Activated CD4-positive, alpha-beta T cell treated with anti-CD3 and anti-CD28 coated beads for 36 hours (primary cell): ENCODE measurements at regions of chr10 and their contacts with region 1.

Region 1: GRCh38 chr10:30783939-30784500 is 154.5 kb upstream of the LYZL2 start:
- DNase-seq: peak; percentile 90
- ATAC-seq: peak; percentile 86
- H3K4me3 Mint-ChIP-seq: peak overlapping the region; percentile 66
- H3K27ac Mint-ChIP-seq: peak overlapping the region; percentile 21
- H3K4me1 Mint-ChIP-seq: peaks cover 20% of the 10 kb centered on the region
- H3K27me3 Mint-ChIP-seq: peaks cover 2% of the 10 kb centered on the region

Region 2: DNA sequence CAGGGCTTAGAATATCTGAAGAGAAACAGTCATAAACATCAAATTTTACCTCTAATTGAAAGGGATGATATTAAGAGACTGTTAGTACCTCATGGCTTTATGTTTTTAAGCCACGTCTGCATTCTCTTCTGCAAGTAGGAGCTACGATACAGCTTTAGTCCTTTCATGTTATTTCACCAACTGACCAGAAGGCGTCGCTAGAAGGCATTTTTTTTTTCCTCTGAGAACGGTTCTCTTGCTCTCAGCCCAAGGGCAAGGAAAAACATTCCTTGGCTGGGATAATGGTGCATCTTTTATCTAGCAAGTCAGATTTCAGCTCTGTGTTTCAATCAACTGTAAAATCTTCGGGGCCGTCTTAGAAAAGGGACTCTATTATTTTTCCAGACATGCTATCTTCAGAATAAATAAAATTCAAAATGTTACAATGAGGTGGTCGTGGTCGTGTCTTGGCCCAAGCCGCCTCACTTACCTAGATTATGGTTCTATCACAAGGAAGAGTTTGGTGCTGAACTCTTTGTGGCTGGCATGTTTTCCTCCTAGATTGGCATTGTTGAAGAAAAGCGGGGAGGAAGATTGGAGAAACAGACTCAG is 112.9 kb before region 1 on chr10:
- CTCF ChIA-PET with region 1: interaction called, 4 read pairs
- POLR2A ChIA-PET with region 1: no interaction called
- intact Hi-C with region 1: loop called (anchors 1 to 10 kb)
- DNase-seq: peak; percentile 47
- ATAC-seq: peak; percentile 74
- H3K4me3 Mint-ChIP-seq: peak overlapping the region; percentile 27
- H3K27ac Mint-ChIP-seq: no peak overlapping the region
- H3K4me1 Mint-ChIP-seq: peaks cover 26% of the 10 kb centered on the region
- H3K27me3 Mint-ChIP-seq: peaks cover 11% of the 10 kb centered on the region

Region 3: GRCh38 chr10:31004611-31005193 is 220.7 kb after region 1 on chr10:
- CTCF ChIA-PET with region 1: no interaction called
- POLR2A ChIA-PET with region 1: no interaction called
- intact Hi-C with region 1: loop called in 1 of 2 experiments (anchors 10 kb)
- DNase-seq: no peak
- ATAC-seq: peak; percentile 70
- H3K4me3 Mint-ChIP-seq: no peak overlapping the region
- H3K27ac Mint-ChIP-seq: no peak overlapping the region
- H3K4me1 Mint-ChIP-seq: peaks cover 36% of the 10 kb centered on the region
- H3K27me3 Mint-ChIP-seq: no peaks in the 10 kb centered on the region

Region 4: DNA sequence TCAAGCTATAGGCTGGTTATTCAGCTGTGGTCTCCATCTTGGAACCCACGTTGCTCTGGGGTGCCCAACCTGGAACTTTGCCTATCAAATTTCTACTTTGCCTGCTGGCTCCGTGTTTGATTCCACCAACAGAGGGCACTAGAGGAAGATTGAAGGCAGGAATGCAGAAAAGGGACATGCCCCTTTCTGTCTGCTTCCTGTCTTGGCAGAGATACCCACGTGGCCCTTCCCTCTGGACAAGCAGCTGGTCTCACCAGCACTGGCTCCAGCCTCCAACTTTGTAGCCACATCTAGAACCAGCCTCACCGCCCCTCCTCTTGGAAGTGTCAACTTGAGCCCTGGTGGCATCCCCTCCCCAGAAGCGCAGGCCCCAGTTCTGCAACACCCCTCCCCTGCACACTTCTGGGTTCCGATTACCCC is 299.8 kb after region 1 on chr10:
- CTCF ChIA-PET with region 1: interaction called, 4 read pairs
- POLR2A ChIA-PET with region 1: no interaction called
- intact Hi-C with region 1: loop called (anchors 1 to 5 kb)
- DNase-seq: peak; percentile 80
- ATAC-seq: peak; percentile 94
- H3K4me3 Mint-ChIP-seq: no peak overlapping the region
- H3K27ac Mint-ChIP-seq: no peak overlapping the region
- H3K4me1 Mint-ChIP-seq: peaks cover 6% of the 10 kb centered on the region
- H3K27me3 Mint-ChIP-seq: no peaks in the 10 kb centered on the region

Region 5: DNA sequence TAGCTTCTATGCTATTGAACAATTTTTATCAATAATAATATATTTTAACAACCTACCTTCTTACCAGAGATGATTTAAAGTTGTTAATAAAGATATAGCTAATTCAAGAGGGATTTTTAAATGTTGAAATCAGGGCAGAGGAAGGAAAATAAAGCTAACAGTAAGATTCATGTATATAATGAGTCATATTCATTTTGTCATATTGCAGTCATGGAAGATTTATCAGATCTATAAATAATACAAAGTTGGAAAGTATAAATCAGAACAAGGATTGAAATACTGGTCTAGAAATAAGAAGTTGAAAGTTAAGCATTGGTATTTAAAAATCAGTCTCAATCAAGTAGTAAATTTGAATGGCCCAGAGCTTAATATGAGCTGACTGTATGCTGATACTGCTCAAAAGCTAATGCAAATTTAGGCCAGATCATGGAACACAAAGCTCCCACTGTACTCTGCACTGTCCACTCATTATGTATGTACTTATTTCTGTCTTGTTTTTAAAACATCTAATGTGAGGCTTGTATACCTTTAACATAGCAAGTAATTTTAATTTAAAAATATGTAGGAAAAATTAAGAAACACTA is 731.9 kb after region 1 on chr10:
- CTCF ChIA-PET with region 1: no interaction called
- POLR2A ChIA-PET with region 1: no interaction called
- intact Hi-C with region 1: loop called in 1 of 2 experiments (anchors 10 kb)
- DNase-seq: no peak
- ATAC-seq: peak; percentile 33
- H3K4me3 Mint-ChIP-seq: no peak overlapping the region
- H3K27ac Mint-ChIP-seq: no peak overlapping the region
- H3K4me1 Mint-ChIP-seq: peaks cover 20% of the 10 kb centered on the region
- H3K27me3 Mint-ChIP-seq: no peaks in the 10 kb centered on the region

Region 6: GRCh38 chr10:31770307-31770902 is 986.4 kb after region 1 on chr10:
- CTCF ChIA-PET with region 1: no interaction called
- POLR2A ChIA-PET with region 1: no interaction called
- intact Hi-C with region 1: loop called (anchors 1 kb)
- DNase-seq: peak; percentile 77
- ATAC-seq: peak; percentile 86
- H3K4me3 Mint-ChIP-seq: no peak overlapping the region
- H3K27ac Mint-ChIP-seq: no peak overlapping the region
- H3K4me1 Mint-ChIP-seq: peaks cover 12% of the 10 kb centered on the region
- H3K27me3 Mint-ChIP-seq: no peaks in the 10 kb centered on the region

Region 7: GRCh38 chr10:32629910-32630309 is 1845.9 kb after region 1 on chr10:
- CTCF ChIA-PET with region 1: no interaction called
- POLR2A ChIA-PET with region 1: no interaction called
- intact Hi-C with region 1: no loop called
- DNase-seq: no peak
- ATAC-seq: no peak
- H3K4me3 Mint-ChIP-seq: no peak overlapping the region
- H3K27ac Mint-ChIP-seq: no peak overlapping the region
- H3K4me1 Mint-ChIP-seq: no peaks in the 10 kb centered on the region
- H3K27me3 Mint-ChIP-seq: no peaks in the 10 kb centered on the region